ENCODE measurements at regions of chr10 and their contacts with region 1.

Region 1: DNA sequence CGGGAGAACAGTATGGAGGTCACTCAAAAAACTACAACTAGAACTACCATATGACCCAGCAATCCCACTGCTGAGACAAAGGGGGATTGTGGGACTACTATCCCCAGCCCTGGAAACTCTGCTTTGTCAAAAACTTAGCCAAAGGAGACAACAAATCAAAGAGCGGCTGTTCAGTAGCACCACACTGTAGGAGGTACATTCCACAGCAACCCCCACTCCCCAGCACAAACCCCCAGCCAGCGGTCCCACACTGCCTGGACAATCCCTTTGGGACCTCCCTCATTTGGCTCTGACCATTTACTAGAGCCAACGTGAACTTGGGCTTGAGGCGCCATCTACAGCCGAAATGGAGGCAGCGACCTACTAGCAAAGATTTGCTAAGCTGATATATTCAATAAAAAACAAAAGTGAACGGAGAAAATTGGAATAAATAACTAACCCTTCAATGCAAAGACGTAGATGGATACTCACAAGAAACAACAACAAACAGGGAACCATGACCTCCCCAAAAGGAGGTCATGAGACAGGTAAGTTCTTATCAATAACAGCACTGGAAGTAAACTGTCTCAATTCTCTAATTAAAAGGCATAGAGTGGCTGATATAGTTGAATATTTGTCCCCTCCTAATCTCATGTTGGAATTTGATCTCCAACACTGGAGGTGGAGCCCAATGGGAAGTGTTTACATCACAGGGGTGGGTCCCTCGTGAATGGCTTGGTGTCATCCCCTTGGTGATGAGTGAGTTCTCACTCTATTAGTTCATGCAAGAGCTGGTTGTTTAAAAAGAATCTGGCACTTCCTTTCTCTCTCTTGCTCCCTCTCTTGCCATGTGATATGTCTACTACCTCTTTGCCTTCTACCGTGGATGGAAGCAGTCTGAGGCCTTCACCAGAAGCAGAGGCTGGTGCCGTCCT is 119.0 kb upstream of the KCNMA1 start:
- DNase-seq: peak; percentile 79
- H3K4me3 ChIP-seq: no peak overlapping the region
- H3K27ac ChIP-seq: no peak overlapping the region
- H3K4me1 ChIP-seq: peaks cover 8% of the 10 kb centered on the region
- H3K27me3 ChIP-seq: no peaks in the 10 kb centered on the region
- CTCF ChIP-seq: peak; percentile 90

Region 2: GRCh38 chr10:77173615-77174461 is 582.7 kb before region 1 on chr10:
- CTCF ChIA-PET with region 1: no interaction called
- POLR2A ChIA-PET with region 1: no interaction called
- intact Hi-C with region 1: loop called (anchors 2 kb)
- DNase-seq: peak; percentile 79
- H3K4me3 ChIP-seq: no peak overlapping the region
- H3K27ac ChIP-seq: no peak overlapping the region
- H3K4me1 ChIP-seq: no peaks in the 10 kb centered on the region
- H3K27me3 ChIP-seq: no peaks in the 10 kb centered on the region
- CTCF ChIP-seq: peak; percentile 91

Region 3: GRCh38 chr10:77456414-77456813 is 300.2 kb before region 1 on chr10:
- CTCF ChIA-PET with region 1: no interaction called
- POLR2A ChIA-PET with region 1: no interaction called
- intact Hi-C with region 1: no loop called
- DNase-seq: no peak
- H3K4me3 ChIP-seq: no peak overlapping the region
- H3K27ac ChIP-seq: no peak overlapping the region
- H3K4me1 ChIP-seq: no peaks in the 10 kb centered on the region
- H3K27me3 ChIP-seq: peaks cover 8% of the 10 kb centered on the region
- CTCF ChIP-seq: no peak

Region 4: GRCh38 chr10:77494327-77494726 is 262.2 kb before region 1 on chr10:
- CTCF ChIA-PET with region 1: no interaction called
- POLR2A ChIA-PET with region 1: no interaction called
- intact Hi-C with region 1: loop called (anchors 10 kb)
- DNase-seq: peak; percentile 40
- H3K4me3 ChIP-seq: no peak overlapping the region
- H3K27ac ChIP-seq: no peak overlapping the region
- H3K4me1 ChIP-seq: no peaks in the 10 kb centered on the region
- H3K27me3 ChIP-seq: peaks cover 9% of the 10 kb centered on the region
- CTCF ChIP-seq: peak; percentile 48

Region 5: GRCh38 chr10:77649333-77650331 is 106.9 kb before region 1 on chr10:
- CTCF ChIA-PET with region 1: no interaction called
- POLR2A ChIA-PET with region 1: no interaction called
- intact Hi-C with region 1: loop called (anchors 5 kb)
- DNase-seq: peak; percentile 13
- H3K4me3 ChIP-seq: no peak overlapping the region
- H3K27ac ChIP-seq: no peak overlapping the region
- H3K4me1 ChIP-seq: peaks cover 7% of the 10 kb centered on the region
- H3K27me3 ChIP-seq: no peaks in the 10 kb centered on the region
- CTCF ChIP-seq: no peak

Region 6: DNA sequence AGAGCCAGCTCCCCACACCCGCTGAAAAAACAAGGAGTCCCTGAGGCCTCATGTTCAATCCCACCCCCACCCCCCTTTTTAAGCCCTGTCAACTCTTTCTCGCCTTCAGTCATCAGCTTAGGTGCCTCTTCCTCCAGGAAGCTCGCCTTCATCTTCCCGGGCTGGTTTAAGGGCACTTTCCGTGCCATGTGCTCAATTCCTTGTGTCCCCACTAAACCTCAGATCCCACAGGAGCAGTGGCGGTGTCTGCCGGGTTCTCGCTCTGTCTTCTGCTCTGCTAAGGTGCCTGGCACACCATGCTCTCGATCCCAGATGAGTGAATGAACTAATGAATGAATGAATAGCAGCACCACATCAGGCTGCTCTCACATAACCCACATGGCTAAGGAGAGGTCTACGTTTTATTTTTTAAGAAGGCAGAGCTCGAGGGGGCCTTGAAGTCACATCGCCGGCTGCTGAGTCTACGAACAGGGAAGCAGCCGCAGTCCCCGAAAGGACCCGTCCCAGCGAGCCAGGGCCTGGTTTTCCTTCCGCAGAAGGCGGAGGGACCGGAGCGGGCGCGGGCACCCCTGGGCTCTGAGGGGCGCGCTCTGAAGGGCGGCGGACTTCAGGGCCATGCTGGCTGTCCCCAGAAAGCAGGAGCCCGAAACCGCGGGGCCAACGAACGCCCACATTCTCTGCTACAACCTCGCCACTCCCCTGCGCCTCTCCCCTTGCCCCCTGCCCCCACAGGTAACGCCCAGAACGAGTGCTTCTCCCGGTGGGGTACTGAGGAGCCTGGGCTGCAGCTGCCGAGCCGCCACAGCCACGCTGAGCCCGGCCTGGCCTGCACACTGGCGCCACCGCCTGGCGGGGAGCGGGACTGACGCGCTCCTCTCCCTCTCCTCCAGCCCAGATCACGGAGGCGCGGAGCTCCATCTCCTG is 45.6 kb before region 1 on chr10:
- CTCF ChIA-PET with region 1: interaction called, 4 read pairs
- POLR2A ChIA-PET with region 1: no interaction called
- intact Hi-C with region 1: loop called (anchors 2 kb)
- DNase-seq: peak; percentile 76
- H3K4me3 ChIP-seq: peak overlapping the region; percentile 31
- H3K27ac ChIP-seq: no peak overlapping the region
- H3K4me1 ChIP-seq: peaks cover 10% of the 10 kb centered on the region
- H3K27me3 ChIP-seq: no peaks in the 10 kb centered on the region
- CTCF ChIP-seq: peak; percentile 99